Tibial artery (tissue), 4 donors: ENCODE measurements at regions of chr1 and their contacts with region 1.

Region 1: DNA sequence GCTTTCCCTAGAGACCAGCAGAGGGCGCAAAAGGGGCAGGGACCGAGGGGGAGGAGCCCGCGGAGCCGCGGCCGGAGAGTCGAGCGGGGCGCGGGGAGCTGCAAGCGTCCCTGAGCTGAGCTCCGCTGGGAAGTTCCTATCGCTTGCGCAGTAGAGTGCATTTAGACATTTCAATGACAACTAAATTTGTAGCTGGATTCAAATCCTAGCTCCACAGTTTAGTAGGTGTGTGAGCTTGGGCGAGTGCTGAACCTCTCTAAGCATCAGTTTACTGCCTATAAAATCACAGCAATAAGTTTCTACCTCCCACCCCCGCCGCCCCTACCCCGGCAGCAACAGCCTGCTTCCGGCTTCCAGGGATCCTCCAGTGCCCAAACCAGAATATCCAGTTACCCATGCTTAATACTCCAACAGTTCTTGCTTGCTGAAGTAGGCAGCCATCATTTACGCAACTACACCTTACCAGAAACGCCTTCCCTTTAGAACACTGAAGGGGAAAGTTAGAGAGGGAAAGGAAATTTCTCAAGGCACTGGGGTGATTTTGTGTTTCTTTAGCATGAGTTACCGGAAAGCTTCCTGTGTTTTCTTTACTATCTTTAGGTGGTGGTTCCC is 9.1 kb downstream of the TLR5 start:
- DNase-seq: peak; percentile 80 to 91
- H3K4me3 ChIP-seq: peak overlapping the region; percentile 44 to 54
- H3K27ac ChIP-seq: peak overlapping the region; percentile 71
- H3K4me1 ChIP-seq: peaks cover 0 to 53% (median 43%) of the 10 kb centered on the region in 4 donors
- H3K27me3 ChIP-seq: no peaks in the 10 kb centered on the region
- CTCF ChIP-seq: peak; percentile 92 to 98

Region 2: DNA sequence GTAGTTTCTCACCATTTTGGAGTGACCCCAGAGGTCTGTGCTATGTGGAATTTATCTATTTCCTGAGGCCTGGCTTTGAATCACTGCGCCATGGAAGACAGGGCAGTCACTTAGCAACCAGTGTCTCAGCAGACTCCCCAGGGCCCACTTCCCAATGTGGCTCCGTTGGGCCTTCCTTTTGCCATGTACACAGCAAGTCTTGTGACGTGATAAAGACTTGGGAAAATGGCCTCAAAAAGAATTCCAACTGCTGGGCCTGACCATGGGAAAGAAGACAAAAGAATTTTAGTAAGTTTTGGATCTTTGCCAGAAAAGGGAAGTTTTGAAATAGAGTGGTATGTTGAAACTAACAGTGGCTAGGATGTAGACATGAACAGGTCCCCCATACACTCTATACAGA is 27.1 kb before region 1 on chr1:
- intact Hi-C with region 1: no loop called
- DNase-seq: peak in 1 of 2 donors; percentile 10
- H3K4me3 ChIP-seq: no peak overlapping the region
- H3K27ac ChIP-seq: no peak overlapping the region
- H3K4me1 ChIP-seq: no peaks in the 10 kb centered on the region
- H3K27me3 ChIP-seq: no peaks in the 10 kb centered on the region
- CTCF ChIP-seq: no peak

Region 3: GRCh38 chr1:223683586-223684487 is 549.9 kb after region 1 on chr1:
- intact Hi-C with region 1: loop called (anchors 10 kb)
- DNase-seq: no peak
- H3K4me3 ChIP-seq: no peak overlapping the region
- H3K27ac ChIP-seq: no peak overlapping the region
- H3K4me1 ChIP-seq: peaks cover 0 to 3% (median 0%) of the 10 kb centered on the region in 4 donors
- H3K27me3 ChIP-seq: peaks cover 0 to 16% of the 10 kb centered on the region in 2 donors
- CTCF ChIP-seq: peak; percentile 60